Activated T-helper 1 cell treated with anti-CD3 and anti-CD28 coated beads, Interleukin-12 subunit alpha, Interleukin-12 subunit beta, Interleukin-2, Interleukin-4 antibody, amounts not matched to agents 30 ng/mL and 10 ng/mL and 1 ng/mL, durations not matched to agents 14 hours and 24 hours and 36 hours (primary cell): ENCODE measurements at regions of chr14 and their contacts with region 1.

Region 1: GRCh38 chr14:55354500-55354899 is 57.1 kb downstream of the ATG14 start:
- DNase-seq: peak; percentile 45
- H3K4me3 Mint-ChIP-seq: peak overlapping the region; percentile 71
- H3K27ac Mint-ChIP-seq: peak overlapping the region; percentile 93
- H3K4me1 Mint-ChIP-seq: peaks cover 29% of the 10 kb centered on the region
- H3K27me3 Mint-ChIP-seq: no peaks in the 10 kb centered on the region

Region 2: DNA sequence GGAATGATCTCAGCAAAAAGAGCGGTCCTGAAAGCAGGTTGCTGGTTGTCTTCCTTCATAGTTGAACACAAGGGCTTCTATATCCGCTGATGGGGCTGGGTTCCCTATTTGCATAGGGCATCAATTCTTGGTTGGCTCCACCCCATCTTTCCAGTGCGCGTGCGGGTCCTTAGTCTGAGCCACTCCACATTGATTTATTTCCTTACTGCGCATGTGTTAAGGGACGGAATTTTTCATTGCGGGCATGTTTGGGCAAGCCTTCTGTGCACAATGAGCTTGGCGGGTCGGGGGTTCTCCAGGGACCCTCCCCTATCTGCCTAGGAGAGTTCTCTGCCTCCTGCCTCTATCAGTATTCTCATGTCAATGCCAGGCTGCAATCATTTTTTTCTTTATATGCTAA is 141.9 kb before region 1 on chr14:
- intact Hi-C with region 1: loop called (anchors 1 kb)
- DNase-seq: no peak
- H3K4me3 Mint-ChIP-seq: no peak overlapping the region
- H3K27ac Mint-ChIP-seq: no peak overlapping the region
- H3K4me1 Mint-ChIP-seq: no peaks in the 10 kb centered on the region
- H3K27me3 Mint-ChIP-seq: peaks cover 9% of the 10 kb centered on the region

Region 3: DNA sequence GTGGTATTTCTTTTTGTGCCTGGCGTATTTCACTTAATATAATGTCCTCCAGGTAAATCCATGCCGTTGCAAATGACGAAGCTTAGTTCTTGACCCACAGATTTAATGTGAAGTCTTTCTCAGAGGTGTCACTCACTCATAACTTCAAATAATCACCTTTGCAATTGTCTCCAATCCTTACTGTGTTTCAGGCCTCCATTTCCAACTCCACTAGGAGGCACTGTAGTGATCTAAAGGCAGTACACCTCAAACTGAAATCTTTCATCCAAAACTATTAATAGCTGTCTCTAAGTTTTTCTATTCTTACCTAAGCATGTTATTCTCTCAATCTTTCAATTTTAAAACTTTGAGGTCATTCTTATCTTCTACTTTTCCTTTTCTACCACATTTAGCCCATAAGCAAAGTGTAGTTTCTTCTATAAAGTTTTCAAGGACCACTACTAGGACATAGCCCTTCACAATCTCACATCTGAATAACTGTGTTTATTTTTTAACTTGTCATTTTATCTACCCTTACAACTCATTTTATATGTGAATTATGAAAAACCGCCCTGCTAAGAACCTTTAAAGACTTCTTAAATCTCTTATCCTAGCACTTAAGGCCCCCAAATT is 108.7 kb before region 1 on chr14:
- intact Hi-C with region 1: loop called (anchors 1 kb)
- DNase-seq: no peak
- H3K4me3 Mint-ChIP-seq: no peak overlapping the region
- H3K27ac Mint-ChIP-seq: no peak overlapping the region
- H3K4me1 Mint-ChIP-seq: no peaks in the 10 kb centered on the region
- H3K27me3 Mint-ChIP-seq: peaks cover 40% of the 10 kb centered on the region

Region 4: GRCh38 chr14:55339770-55340169 is 14.7 kb before region 1 on chr14:
- intact Hi-C with region 1: loop called (anchors 1 kb)
- DNase-seq: no peak
- H3K4me3 Mint-ChIP-seq: peak overlapping the region; percentile 48
- H3K27ac Mint-ChIP-seq: peak overlapping the region; percentile 16
- H3K4me1 Mint-ChIP-seq: peaks cover 85% of the 10 kb centered on the region
- H3K27me3 Mint-ChIP-seq: no peaks in the 10 kb centered on the region